Panc1 (cell line): ENCODE measurements at regions of chr16 and their contacts with region 1.

Region 1: GRCh38 chr16:4101421-4102219 is 14.6 kb downstream of the ADCY9 start:
- DNase-seq: no peak
- ATAC-seq: no peak
- H3K4me3 ChIP-seq: no peak overlapping the region
- H3K27ac ChIP-seq: peak overlapping the region; percentile 77
- H3K4me1 ChIP-seq: peaks cover 45% of the 10 kb centered on the region
- H3K27me3 ChIP-seq: no peaks in the 10 kb centered on the region
- CTCF ChIP-seq: no peak

Region 2: GRCh38 chr16:3849751-3850543 is 251.7 kb before region 1 on chr16:
- CTCF ChIA-PET with region 1: no interaction called
- POLR2A ChIA-PET with region 1: interaction called, 14 read pairs
- in situ Hi-C with region 1: no loop called
- intact Hi-C with region 1: no loop called
- DNase-seq: no peak
- ATAC-seq: no peak
- H3K4me3 ChIP-seq: no peak overlapping the region
- H3K27ac ChIP-seq: no peak overlapping the region
- H3K4me1 ChIP-seq: no peaks in the 10 kb centered on the region; the same call in 1 of the 2 replicates
- H3K27me3 ChIP-seq: no peaks in the 10 kb centered on the region
- CTCF ChIP-seq: no peak

Region 3: GRCh38 chr16:4327386-4328045 is 225.9 kb after region 1 on chr16:
- CTCF ChIA-PET with region 1: no interaction called
- POLR2A ChIA-PET with region 1: no interaction called
- in situ Hi-C with region 1: no loop called
- intact Hi-C with region 1: no loop called
- DNase-seq: no peak
- ATAC-seq: no peak; the same call in 1 of the 2 replicates
- H3K4me3 ChIP-seq: peak overlapping the region; percentile 19 to 34; a peak in 3 of 4 replicates
- H3K27ac ChIP-seq: peak overlapping the region; percentile 86
- H3K4me1 ChIP-seq: peaks cover 77% of the 10 kb centered on the region
- H3K27me3 ChIP-seq: no peaks in the 10 kb centered on the region
- CTCF ChIP-seq: no peak